ENCODE measurements at regions of chr7 and their contacts with region 1.

Region 1: DNA sequence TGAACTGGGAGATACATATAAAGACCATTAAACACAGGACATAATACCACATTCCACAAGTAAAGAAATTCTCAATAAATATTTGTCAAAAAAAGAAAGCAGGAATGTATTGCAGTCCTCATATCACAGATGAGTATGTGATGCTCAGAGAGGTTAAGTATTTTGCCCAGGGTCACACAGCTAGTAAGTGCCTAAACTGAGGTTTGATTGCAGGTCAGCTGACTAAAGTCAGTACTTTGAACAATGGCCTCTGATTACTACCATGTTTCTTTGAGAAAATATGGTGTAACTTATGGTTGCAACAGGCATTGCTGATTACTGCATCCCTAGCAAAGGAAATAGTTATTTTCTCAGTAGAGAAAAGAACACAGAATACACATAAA is 267.1 kb downstream of the ELMO1 start:
- DNase-seq: no peak
- H3K4me3 ChIP-seq: no peak overlapping the region
- CTCF ChIP-seq: no peak

Region 2: GRCh38 chr7:36487756-36488336 is 693.7 kb before region 1 on chr7:
- CTCF ChIA-PET with region 1: interaction called, 20 read pairs
- POLR2A ChIA-PET with region 1: no interaction called
- DNase-seq: no peak
- H3K4me3 ChIP-seq: no peak overlapping the region
- CTCF ChIP-seq: peak; percentile 64

Region 3: GRCh38 chr7:36827726-36828703 is 353.5 kb before region 1 on chr7:
- CTCF ChIA-PET with region 1: no interaction called
- POLR2A ChIA-PET with region 1: no interaction called
- DNase-seq: no peak
- H3K4me3 ChIP-seq: no peak overlapping the region
- CTCF ChIP-seq: no peak

Region 4: DNA sequence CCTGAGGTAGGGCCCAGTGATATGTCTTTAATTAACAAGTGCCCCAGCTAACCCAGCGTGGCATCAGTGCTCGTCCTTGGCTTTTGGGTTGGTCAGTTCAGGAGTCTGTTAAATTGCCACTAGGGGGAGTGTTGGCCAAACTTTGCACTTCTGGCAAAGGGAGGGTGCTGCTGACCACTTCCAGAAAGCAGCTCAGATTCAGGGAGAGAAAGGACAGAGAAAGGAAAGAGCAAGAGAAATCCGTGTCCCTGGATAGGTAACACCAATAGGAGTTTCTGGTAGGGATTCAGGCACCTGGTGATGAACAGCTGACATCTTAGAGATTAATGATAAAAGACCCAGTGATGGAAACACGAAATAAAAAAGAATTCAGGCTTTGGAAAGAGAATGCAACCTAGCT is 214.2 kb before region 1 on chr7:
- CTCF ChIA-PET with region 1: interaction called, 157 read pairs
- POLR2A ChIA-PET with region 1: interaction called, 3 read pairs
- DNase-seq: peak; percentile 7
- H3K4me3 ChIP-seq: no peak overlapping the region
- CTCF ChIP-seq: peak; percentile 83

Region 5: GRCh38 chr7:36979810-36980248 is 201.7 kb before region 1 on chr7:
- CTCF ChIA-PET with region 1: interaction called, 298 read pairs
- POLR2A ChIA-PET with region 1: no interaction called
- DNase-seq: no peak
- H3K4me3 ChIP-seq: no peak overlapping the region
- CTCF ChIP-seq: no peak

Region 6: DNA sequence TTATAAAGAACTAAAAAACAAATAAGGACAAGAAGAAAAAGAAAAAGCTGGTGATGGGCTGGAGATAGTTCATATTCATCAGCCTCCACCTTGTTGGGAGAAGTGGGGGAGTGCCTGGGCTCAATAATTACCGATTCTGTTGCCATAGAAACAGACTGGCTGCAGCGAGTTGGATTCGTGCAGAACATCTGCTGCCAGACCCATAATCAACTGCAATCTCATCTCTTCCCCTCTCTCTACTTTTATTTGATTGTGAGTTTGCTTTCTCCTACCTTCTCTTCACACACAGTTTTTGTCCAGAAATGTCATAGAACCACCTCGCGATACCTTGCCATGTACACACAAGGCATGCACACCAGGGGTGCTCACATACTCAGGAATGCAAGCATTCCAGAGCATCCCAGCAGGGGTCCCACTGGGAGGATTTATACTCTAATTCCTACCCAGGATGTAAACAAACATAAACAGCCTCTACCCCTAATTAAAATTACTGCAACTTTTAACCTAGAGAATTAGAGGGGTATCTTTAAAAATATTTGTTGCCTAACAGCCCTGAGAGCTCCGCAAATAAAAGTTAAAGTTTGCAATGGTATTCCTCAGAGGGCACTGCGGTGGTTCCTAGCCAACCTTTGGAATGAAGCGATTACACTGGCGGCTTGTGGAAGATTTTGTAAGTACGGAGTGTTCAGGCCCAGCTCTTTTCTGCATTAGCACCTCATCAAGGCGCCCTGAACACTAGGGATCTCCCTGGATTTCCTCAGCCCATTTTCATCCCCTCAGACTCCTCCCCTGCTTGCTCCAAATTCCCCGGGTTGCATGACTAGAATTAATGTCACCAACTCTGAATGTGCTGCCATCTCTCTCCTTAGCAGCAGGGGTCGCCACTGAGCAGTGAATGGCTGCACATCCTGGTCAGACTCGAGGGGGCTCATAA is 194.8 kb before region 1 on chr7:
- CTCF ChIA-PET with region 1: interaction called, 298 read pairs
- POLR2A ChIA-PET with region 1: no interaction called
- DNase-seq: no peak
- H3K4me3 ChIP-seq: no peak overlapping the region
- CTCF ChIP-seq: peak; percentile 93

Region 7: DNA sequence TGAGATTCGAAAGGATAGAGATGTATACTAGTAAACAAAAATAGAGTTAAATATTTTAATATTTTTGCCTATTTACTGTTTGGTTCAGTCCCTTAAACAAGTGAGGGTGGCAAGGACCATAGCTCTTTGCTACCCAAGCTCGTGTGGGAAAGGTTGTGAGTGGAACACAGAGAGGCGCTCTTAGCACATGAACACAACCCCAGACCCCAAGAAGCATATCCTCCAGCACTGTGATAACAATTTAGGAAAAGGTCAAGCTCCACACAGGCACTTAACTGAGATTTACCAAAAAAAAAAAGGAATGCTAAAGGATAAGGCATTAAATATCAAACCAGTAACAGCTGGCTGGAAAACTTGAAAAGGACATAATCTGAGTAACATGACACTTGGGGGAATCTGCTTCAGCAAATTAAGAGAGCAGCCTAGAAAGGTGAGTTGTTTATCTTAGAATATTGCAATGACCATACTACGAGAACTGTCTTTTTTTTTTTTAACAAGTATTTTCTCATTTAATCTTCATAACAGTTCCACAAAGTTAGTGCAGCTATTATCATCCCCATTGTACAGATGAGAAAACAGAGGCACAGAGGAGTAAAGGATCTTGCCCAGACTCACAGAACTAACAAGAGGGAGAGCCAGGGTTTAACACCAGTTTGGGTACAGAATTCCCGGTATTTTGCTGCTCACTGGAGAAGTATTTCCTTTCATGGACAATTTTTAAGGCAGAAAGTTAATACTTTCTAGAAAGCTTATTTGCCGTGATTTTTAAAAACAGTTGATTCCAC is 153.8 kb before region 1 on chr7:
- CTCF ChIA-PET with region 1: interaction called, 20 read pairs
- POLR2A ChIA-PET with region 1: no interaction called
- DNase-seq: no peak
- H3K4me3 ChIP-seq: no peak overlapping the region
- CTCF ChIP-seq: no peak

Region 8: GRCh38 chr7:37201003-37201875 is 19.7 kb after region 1 on chr7:
- CTCF ChIA-PET with region 1: interaction called, 91 read pairs
- POLR2A ChIA-PET with region 1: no interaction called
- DNase-seq: peak; percentile 14
- H3K4me3 ChIP-seq: no peak overlapping the region
- CTCF ChIP-seq: peak; percentile 81

Measured in AG04449 (cell line).